ENCODE measurements at regions of chr7 and their contacts with region 1.

Region 1: DNA sequence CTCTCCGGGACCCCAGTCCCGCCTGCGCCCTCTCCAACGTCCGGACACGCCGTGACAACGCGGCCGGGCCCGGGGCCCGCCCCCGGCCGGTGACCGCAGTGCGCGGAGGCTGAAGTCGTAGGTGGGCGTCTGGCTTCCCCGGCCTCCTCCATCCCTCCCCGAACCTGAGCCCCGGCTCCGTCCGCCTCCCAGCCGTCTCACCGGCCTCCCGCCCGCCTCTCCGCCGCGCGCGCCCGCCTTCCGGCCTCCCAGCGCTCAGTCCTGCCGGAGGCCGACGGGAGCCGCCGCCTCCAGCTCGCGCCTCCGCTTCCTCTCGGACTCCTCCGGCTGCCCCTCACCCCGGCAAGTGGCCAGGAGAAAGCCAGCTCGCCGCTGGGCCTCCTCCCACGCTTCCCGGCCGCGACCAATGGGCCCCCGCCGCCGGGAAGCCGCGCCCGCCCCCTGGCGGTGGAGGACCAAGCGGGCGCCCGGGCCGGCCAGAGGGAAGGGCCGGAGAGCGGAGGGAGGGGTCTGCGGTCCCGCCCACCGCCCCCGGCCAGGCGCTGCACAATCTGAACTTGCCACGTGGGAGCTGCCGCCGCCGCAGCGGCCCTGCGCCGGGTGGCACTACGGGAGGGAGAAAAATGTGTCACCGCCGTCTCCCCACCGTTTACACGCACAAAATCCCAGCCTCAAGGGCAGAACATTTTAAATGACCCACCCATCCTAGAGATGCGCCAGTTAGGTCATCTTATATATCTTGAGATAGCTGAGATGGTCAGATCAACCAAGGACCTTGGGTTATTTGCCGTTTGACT is at the start of gene FAM3C:
- DNase-seq: peak; percentile 96
- ATAC-seq: peak; percentile 100
- H3K4me3 ChIP-seq: peak within 1 kb of the TSS; percentile 100
- H3K27ac ChIP-seq: peak within 1 kb of the TSS; percentile 64 to 69
- H3K4me1 ChIP-seq: no peaks in the 10 kb centered on the region
- H3K27me3 ChIP-seq: no peaks in the 10 kb centered on the region
- total RNA-seq, gene FAM3C: 64.9 to 68.4 TPM

Region 2: GRCh38 chr7:121504478-121504877 is 108.3 kb after region 1 on chr7:
- intact Hi-C with region 1: loop called in 1 of 2 experiments (anchors 10 kb)
- DNase-seq: peak in 1 of 2 donors; percentile 68
- ATAC-seq: peak; percentile 74
- H3K4me3 ChIP-seq: no peak overlapping the region
- H3K27ac ChIP-seq: peak overlapping the region in 1 of 2 donors; percentile 73
- H3K4me1 ChIP-seq: no peaks in the 10 kb centered on the region
- H3K27me3 ChIP-seq: no peaks in the 10 kb centered on the region